AG04450 (cell line): ENCODE measurements at regions of chr6 and their contacts with region 1.

Region 1: DNA sequence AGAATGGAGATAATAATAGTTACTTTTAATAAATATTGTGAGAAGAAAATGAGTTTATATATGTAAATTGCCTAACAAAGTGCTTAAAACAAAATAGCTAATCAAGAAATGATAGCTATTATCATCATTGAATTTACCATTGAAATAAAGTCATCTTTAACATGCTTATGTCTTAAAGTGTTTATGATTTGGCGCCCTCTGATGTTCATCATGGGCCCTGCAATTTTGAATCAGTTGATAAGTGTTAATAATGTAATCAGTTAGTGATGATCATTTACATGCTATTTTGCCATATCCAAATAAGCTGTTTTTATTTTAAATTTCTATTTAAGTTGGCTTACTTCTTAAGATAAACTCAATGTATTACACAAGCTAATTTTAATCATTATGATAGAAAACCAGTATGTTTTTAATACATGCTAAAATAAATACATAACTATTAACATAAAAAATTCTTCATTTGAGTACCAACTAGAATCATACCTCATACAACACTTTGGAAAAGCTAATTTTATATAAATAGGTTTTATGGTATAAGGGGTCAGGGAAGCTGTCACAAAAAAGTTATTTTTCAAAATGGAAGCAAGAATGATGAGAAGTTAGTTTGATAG is 39.2 kb upstream of the TPD52L1 start:
- DNase-seq: no peak
- H3K4me3 ChIP-seq: no peak overlapping the region
- H3K27ac ChIP-seq: no peak overlapping the region
- H3K27me3 ChIP-seq: no peaks in the 10 kb centered on the region
- CTCF ChIP-seq: peak; percentile 89

Region 2: DNA sequence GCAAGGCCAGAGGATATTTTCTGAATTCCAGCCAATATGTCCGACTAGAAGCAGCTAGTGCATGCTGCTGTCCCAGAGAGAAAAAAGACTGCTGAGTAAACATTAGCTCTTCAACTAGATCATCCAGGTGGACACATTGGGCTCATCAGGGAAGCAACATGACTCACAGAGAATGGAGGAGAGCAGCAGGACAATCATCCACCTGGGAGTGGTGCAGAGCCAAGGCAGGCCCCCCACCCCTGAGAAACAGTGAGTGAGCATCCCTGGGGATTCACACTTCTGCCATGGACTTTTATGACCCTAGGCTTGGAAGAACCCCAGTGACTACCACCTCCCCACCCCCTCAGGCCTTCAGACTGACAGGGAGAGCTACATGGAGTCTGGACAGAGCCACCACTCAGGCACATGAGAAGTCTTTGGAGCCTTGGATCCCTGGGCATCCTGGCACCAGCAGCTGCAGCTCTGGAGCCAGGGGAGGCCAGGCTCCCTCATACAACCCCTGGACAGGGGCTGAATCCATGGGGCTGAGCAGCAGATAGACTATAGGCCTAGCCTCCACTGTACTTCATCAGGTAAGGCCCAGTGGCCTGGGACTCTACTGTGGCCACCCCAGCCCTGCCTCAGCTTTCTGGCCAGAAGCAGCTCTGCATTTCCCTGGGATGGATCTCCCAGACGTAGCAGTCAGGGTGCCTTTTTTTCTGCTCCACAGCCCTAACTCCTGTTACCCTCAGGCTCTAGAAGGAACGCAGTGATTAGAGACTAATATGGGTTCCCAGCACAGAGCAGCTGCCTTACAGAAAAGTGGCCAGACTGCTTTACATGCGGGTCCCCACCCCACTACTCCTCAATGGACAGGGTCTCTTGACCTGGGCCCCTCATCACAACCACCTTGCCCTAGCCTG is 235.0 kb before region 1 on chr6:
- CTCF ChIA-PET with region 1: interaction called, 178 read pairs
- POLR2A ChIA-PET with region 1: no interaction called
- DNase-seq: no peak
- H3K4me3 ChIP-seq: no peak overlapping the region
- H3K27ac ChIP-seq: no peak overlapping the region
- H3K27me3 ChIP-seq: no peaks in the 10 kb centered on the region
- CTCF ChIP-seq: no peak

Region 3: DNA sequence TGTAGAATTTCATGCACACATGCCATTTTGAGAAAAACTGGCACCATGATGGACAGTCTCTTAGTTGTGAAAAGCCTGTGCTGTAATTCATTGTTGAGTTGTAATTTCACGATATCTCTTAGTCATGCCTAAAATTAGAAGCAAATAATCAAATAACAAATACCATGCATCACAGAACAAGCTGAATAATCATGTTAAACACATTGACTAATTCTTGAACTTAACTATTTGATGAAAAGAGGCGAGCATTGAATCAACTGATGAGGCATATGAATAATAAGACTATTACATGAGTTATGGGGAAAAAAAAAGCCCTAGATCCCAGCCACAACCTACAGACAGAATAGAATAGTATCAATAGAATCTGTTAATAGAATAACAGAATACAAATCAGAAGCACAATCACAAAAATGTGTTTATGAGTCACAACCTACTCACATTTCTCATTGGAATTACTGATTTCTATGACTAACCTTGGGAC is 166.3 kb before region 1 on chr6:
- CTCF ChIA-PET with region 1: interaction called, 11 read pairs
- POLR2A ChIA-PET with region 1: no interaction called
- DNase-seq: no peak
- H3K4me3 ChIP-seq: no peak overlapping the region
- H3K27ac ChIP-seq: no peak overlapping the region
- H3K27me3 ChIP-seq: no peaks in the 10 kb centered on the region
- CTCF ChIP-seq: no peak

Region 4: GRCh38 chr6:124974771-124975377 is 139.5 kb before region 1 on chr6:
- CTCF ChIA-PET with region 1: interaction called, 11 read pairs
- POLR2A ChIA-PET with region 1: no interaction called
- DNase-seq: no peak
- H3K4me3 ChIP-seq: no peak overlapping the region
- H3K27ac ChIP-seq: no peak overlapping the region
- H3K27me3 ChIP-seq: no peaks in the 10 kb centered on the region
- CTCF ChIP-seq: no peak

Region 5: GRCh38 chr6:125129354-125129753 is 15.0 kb after region 1 on chr6:
- CTCF ChIA-PET with region 1: interaction called, 41 read pairs
- POLR2A ChIA-PET with region 1: no interaction called
- DNase-seq: no peak
- H3K4me3 ChIP-seq: no peak overlapping the region
- H3K27ac ChIP-seq: no peak overlapping the region
- H3K27me3 ChIP-seq: no peaks in the 10 kb centered on the region
- CTCF ChIP-seq: no peak

Region 6: GRCh38 chr6:125153391-125154117 is 39.2 kb after region 1 on chr6 and contains the start of gene TPD52L1:
- CTCF ChIA-PET with region 1: interaction called, 14 read pairs
- POLR2A ChIA-PET with region 1: no interaction called
- DNase-seq: no peak
- H3K4me3 ChIP-seq: peak within 1 kb of the TSS; percentile 70
- H3K27ac ChIP-seq: no peak within 1 kb of the TSS
- H3K27me3 ChIP-seq: peaks cover 3% of the 10 kb centered on the region
- CTCF ChIP-seq: peak; percentile 94
- polyA plus RNA-seq, gene TPD52L1: 10.9 and 11.1 TPM in 2 replicates